Right cardiac atrium (tissue), 5 donors: ENCODE measurements at regions of chr18 and their contacts with region 1.

Region 1: GRCh38 chr18:24885276-24885675 is 424.8 kb downstream of the HRH4 start:
- DNase-seq: no peak
- ATAC-seq: no peak
- H3K4me3 ChIP-seq: no peak overlapping the region
- H3K27ac ChIP-seq: no peak overlapping the region
- H3K4me1 ChIP-seq: no peaks in the 10 kb centered on the region
- H3K27me3 ChIP-seq: no peaks in the 10 kb centered on the region

Region 2: GRCh38 chr18:25042641-25043051 is 157.4 kb after region 1 on chr18:
- intact Hi-C with region 1: no loop called
- DNase-seq: no peak
- ATAC-seq: peak; percentile 63 to 72
- H3K4me3 ChIP-seq: no peak overlapping the region
- H3K27ac ChIP-seq: no peak overlapping the region
- H3K4me1 ChIP-seq: no peaks in the 10 kb centered on the region
- H3K27me3 ChIP-seq: no peaks in the 10 kb centered on the region

Region 3: GRCh38 chr18:25133879-25134278 is 248.6 kb after region 1 on chr18:
- intact Hi-C with region 1: no loop called
- DNase-seq: no peak
- ATAC-seq: no peak
- H3K4me3 ChIP-seq: no peak overlapping the region
- H3K27ac ChIP-seq: no peak overlapping the region
- H3K4me1 ChIP-seq: peaks cover 17% of the 10 kb centered on the region
- H3K27me3 ChIP-seq: no peaks in the 10 kb centered on the region

Region 4: GRCh38 chr18:25360301-25360899 is 475.1 kb after region 1 on chr18:
- intact Hi-C with region 1: loop called in 1 of 4 experiments (anchors 10 kb)
- DNase-seq: no peak
- ATAC-seq: no peak
- H3K4me3 ChIP-seq: no peak overlapping the region
- H3K27ac ChIP-seq: no peak overlapping the region
- H3K4me1 ChIP-seq: no peaks in the 10 kb centered on the region
- H3K27me3 ChIP-seq: no peaks in the 10 kb centered on the region